ENCODE measurements at regions of chr14 and their contacts with region 1.

Region 1: GRCh38 chr14:87944987-87945604 is 47.9 kb downstream of the GALC start:
- DNase-seq: no peak
- H3K4me3 Mint-ChIP-seq: no peak overlapping the region
- H3K27ac Mint-ChIP-seq: no peak overlapping the region
- H3K4me1 Mint-ChIP-seq: no peaks in the 10 kb centered on the region
- H3K27me3 Mint-ChIP-seq: no peaks in the 10 kb centered on the region

Region 2: GRCh38 chr14:88129306-88130056 is 184.4 kb after region 1 on chr14:
- CTCF ChIA-PET with region 1: no interaction called
- intact Hi-C with region 1: loop called (anchors 1 kb)
- DNase-seq: peak; percentile 13
- H3K4me3 Mint-ChIP-seq: no peak overlapping the region
- H3K27ac Mint-ChIP-seq: no peak overlapping the region
- H3K4me1 Mint-ChIP-seq: peaks cover 19% of the 10 kb centered on the region
- H3K27me3 Mint-ChIP-seq: peaks cover 5% of the 10 kb centered on the region

Region 3: DNA sequence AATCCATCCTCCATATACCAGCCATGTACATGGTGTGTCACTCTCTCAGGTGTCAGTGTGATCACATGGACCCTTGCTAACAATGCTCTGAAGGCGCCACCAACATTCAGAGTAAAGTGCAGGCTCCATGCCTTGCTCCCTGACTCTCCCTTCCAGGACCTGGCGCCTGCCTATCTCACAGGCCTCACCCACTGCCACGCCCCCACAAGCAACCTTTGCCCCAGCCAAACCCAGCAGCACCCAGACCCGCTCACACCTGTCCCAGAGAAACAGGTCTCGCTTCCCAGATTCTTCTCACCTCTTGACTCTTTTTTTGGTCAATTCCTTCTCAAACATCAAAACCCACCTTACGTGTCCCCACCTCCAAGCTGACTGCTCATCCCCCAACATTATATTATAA is 325.7 kb after region 1 on chr14:
- CTCF ChIA-PET with region 1: no interaction called
- intact Hi-C with region 1: no loop called
- DNase-seq: no peak
- H3K4me3 Mint-ChIP-seq: no peak overlapping the region
- H3K27ac Mint-ChIP-seq: no peak overlapping the region
- H3K4me1 Mint-ChIP-seq: no peaks in the 10 kb centered on the region
- H3K27me3 Mint-ChIP-seq: peaks cover 31% of the 10 kb centered on the region

Region 4: GRCh38 chr14:88621100-88621499 is 676.0 kb after region 1 on chr14:
- CTCF ChIA-PET with region 1: no interaction called
- intact Hi-C with region 1: no loop called
- DNase-seq: no peak
- H3K4me3 Mint-ChIP-seq: no peak overlapping the region
- H3K27ac Mint-ChIP-seq: no peak overlapping the region
- H3K4me1 Mint-ChIP-seq: no peaks in the 10 kb centered on the region
- H3K27me3 Mint-ChIP-seq: no peaks in the 10 kb centered on the region

Measured in activated naive CD4-positive, alpha-beta T cell treated with anti-CD3 and anti-CD28 coated beads for 36 hours (primary cell).